HEK293 (cell line): ENCODE measurements at regions of chrX and their contacts with region 1.

Region 1: GRCh38 chrX:71859637-71860036 is 51.0 kb upstream of the NHSL2 start:
- H3K4me3 ChIP-seq: no peak overlapping the region
- H3K27ac ChIP-seq: no peak overlapping the region
- H3K4me1 ChIP-seq: no peaks in the 10 kb centered on the region
- CTCF ChIP-seq: peak; percentile 52; the same call in 1 of the 2 replicates

Region 2: DNA sequence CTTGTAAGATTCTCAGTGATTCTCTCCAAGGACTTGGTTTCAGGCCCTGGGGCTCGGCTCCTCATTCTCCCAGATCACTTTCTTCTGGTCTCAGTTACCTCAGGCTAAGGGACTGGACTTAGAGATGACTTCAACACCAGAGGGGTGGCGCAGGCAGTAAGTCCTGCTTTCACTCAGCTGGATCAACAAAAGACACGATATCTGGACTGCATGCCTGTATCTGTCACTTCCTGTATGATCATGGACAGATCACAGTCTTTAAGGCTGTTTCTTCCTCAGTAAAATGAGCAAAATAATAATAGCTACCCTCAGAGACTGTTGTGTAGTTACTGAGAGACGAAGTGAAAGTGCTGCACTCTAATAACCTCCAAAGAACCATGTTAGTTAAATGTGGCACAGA is 221.8 kb before region 1 on chrX:
- CTCF ChIA-PET with region 1: no interaction called
- POLR2A ChIA-PET with region 1: no interaction called
- H3K4me3 ChIP-seq: no peak overlapping the region
- H3K27ac ChIP-seq: no peak overlapping the region
- H3K4me1 ChIP-seq: no peaks in the 10 kb centered on the region
- CTCF ChIP-seq: no peak

Region 3: GRCh38 chrX:71671043-71671780 is 188.4 kb before region 1 on chrX:
- CTCF ChIA-PET with region 1: interaction called, 14 read pairs
- POLR2A ChIA-PET with region 1: no interaction called
- H3K4me3 ChIP-seq: no peak overlapping the region
- H3K27ac ChIP-seq: no peak overlapping the region
- H3K4me1 ChIP-seq: no peaks in the 10 kb centered on the region
- CTCF ChIP-seq: no peak